ENCODE measurements at regions of chr4 and their contacts with region 1.

Region 1: GRCh38 chr4:183618681-183619080 is 40.3 kb downstream of the RWDD4 start:
- DNase-seq: no peak
- ATAC-seq: peak; percentile 56 to 64
- H3K4me3 ChIP-seq: peak overlapping the region in 1 of 4 donors; percentile 30
- H3K27ac ChIP-seq: peak overlapping the region; percentile 69 to 81 (median 76)
- H3K4me1 ChIP-seq: peaks cover 7 to 9% of the 10 kb centered on the region in 2 donors
- H3K27me3 ChIP-seq: no peaks in the 10 kb centered on the region
- CTCF ChIP-seq: no peak
- POLR2A ChIP-seq: no peak

Region 2: DNA sequence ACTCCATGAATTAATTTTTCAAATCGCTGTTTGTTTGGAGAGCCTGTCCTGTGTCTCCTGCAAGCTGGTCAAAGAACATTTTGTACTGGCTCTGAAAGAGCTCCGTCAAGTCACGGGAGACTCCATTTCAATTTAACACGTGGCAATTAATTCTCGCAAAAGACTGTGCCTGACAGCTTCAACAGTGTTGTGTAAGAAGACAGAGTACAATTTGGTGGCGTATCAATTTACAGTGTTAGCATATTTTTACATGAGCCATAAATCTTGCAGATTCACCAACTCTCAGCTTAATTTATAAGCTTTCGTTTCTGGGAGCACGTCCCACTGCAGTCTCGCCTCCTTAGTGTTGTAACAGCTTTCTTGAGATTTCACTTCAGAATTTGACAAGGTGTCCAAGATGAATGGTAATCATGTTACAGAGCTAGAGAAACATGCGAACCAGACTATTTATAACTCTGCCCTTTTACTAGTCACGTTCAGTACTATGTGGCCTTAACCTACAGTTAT is 30.5 kb before region 1 on chr4:
- in situ Hi-C with region 1: no loop called
- intact Hi-C with region 1: loop called (anchors 1 kb)
- DNase-seq: peak; percentile 74 to 87
- ATAC-seq: peak; percentile 96
- H3K4me3 ChIP-seq: no peak overlapping the region
- H3K27ac ChIP-seq: peak overlapping the region; percentile 85 to 95 (median 90)
- H3K4me1 ChIP-seq: peaks cover 22 to 23% of the 10 kb centered on the region in 2 donors
- H3K27me3 ChIP-seq: no peaks in the 10 kb centered on the region
- CTCF ChIP-seq: no peak
- POLR2A ChIP-seq: peak in 1 of 2 donors; percentile 48

Region 3: GRCh38 chr4:184147858-184148737 is 529.4 kb after region 1 on chr4:
- in situ Hi-C with region 1: no loop called
- intact Hi-C with region 1: no loop called
- DNase-seq: no peak
- ATAC-seq: no peak
- H3K4me3 ChIP-seq: no peak overlapping the region
- H3K27ac ChIP-seq: no peak overlapping the region
- H3K4me1 ChIP-seq: no peaks in the 10 kb centered on the region
- H3K27me3 ChIP-seq: no peaks in the 10 kb centered on the region
- CTCF ChIP-seq: no peak
- POLR2A ChIP-seq: no peak